ENCODE measurements at regions of chr7 and their contacts with region 1.

Region 1: GRCh38 chr7:54015251-54015650 is 526.9 kb upstream of the VSTM2A start:
- DNase-seq: no peak
- ATAC-seq: no peak
- H3K4me3 ChIP-seq: no peak overlapping the region
- H3K27ac ChIP-seq: no peak overlapping the region
- H3K4me1 ChIP-seq: no peaks in the 10 kb centered on the region
- H3K27me3 ChIP-seq: no peaks in the 10 kb centered on the region
- CTCF ChIP-seq: no peak
- POLR2A ChIP-seq: no peak

Region 2: GRCh38 chr7:53984776-53985175 is 30.5 kb before region 1 on chr7:
- intact Hi-C with region 1: loop called in 1 of 10 experiments (anchors 10 kb)
- DNase-seq: no peak
- ATAC-seq: peak in 1 of 4 donors; percentile 77
- H3K4me3 ChIP-seq: peak overlapping the region in 1 of 12 donors; percentile 18
- H3K27ac ChIP-seq: peak overlapping the region in 2 of 12 donors; percentile 25 to 43
- H3K4me1 ChIP-seq: no peaks in the 10 kb centered on the region
- H3K27me3 ChIP-seq: no peaks in the 10 kb centered on the region
- CTCF ChIP-seq: no peak
- POLR2A ChIP-seq: no peak

Region 3: DNA sequence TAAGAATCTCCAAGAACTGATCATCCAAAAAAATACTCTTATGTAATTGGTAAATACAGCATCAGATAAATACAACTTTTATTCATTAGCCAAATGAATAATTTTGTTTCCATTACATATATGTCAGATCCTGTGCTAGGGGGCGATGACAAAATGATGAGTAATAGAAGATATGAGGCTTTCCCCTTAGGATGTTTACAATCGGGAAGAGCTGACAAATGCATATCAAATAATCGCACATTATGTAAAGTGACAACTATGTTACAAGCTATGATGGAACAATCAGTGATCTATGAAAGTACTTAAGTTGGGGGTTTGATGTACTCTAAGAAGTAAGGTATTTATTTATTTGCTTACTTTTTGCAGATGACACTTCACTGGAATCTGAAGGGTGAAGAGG is 61.4 kb after region 1 on chr7:
- intact Hi-C with region 1: loop called in 1 of 10 experiments (anchors 10 kb)
- DNase-seq: no peak
- ATAC-seq: no peak
- H3K4me3 ChIP-seq: no peak overlapping the region
- H3K27ac ChIP-seq: no peak overlapping the region
- H3K4me1 ChIP-seq: no peaks in the 10 kb centered on the region
- H3K27me3 ChIP-seq: no peaks in the 10 kb centered on the region
- CTCF ChIP-seq: no peak
- POLR2A ChIP-seq: no peak